ENCODE measurements at regions of chr10 and their contacts with region 1.

Region 1: DNA sequence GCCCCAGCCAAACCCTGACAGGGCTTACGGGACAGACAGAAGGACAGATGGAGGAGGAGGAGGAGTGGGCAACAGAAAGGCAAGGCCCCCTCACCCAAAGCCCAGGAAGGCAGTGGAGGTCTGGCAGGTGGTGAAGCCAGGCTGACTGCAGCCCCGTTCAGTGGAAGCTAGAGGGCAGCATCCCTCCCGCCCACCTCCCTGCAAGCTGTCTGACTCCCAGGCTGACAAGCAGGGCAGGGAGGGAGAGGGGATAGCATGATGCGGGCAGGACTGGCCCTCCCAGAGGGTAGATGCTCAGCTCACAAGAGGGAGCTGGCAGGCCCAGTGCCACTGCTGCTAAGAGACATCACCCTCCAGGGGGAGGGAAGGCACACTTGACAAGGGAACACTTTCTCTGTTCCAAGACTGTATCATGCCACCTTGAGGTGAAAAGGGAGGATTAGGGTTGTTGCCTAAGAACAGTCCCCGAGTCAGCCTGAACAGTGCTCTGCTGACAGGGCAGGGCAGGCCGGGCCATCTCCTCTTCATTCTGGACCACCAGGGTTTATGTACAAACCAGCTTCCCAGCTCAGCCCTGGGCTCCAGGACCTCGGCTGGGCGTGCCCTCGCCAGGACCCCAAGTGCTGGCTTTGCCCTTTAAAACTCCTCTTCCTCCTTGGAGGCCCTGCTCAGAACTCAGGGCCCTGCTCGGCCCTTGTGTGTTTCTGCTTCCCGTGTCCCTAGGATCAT is 61.8 kb downstream of the RASGEF1A start:
- DNase-seq: peak; percentile 79
- ATAC-seq: peak; percentile 73
- H3K4me3 Mint-ChIP-seq: no peak overlapping the region
- H3K27ac Mint-ChIP-seq: no peak overlapping the region
- H3K4me1 Mint-ChIP-seq: peaks cover 2% of the 10 kb centered on the region
- H3K27me3 Mint-ChIP-seq: no peaks in the 10 kb centered on the region
- CTCF ChIP-seq: peak; percentile 88

Region 2: DNA sequence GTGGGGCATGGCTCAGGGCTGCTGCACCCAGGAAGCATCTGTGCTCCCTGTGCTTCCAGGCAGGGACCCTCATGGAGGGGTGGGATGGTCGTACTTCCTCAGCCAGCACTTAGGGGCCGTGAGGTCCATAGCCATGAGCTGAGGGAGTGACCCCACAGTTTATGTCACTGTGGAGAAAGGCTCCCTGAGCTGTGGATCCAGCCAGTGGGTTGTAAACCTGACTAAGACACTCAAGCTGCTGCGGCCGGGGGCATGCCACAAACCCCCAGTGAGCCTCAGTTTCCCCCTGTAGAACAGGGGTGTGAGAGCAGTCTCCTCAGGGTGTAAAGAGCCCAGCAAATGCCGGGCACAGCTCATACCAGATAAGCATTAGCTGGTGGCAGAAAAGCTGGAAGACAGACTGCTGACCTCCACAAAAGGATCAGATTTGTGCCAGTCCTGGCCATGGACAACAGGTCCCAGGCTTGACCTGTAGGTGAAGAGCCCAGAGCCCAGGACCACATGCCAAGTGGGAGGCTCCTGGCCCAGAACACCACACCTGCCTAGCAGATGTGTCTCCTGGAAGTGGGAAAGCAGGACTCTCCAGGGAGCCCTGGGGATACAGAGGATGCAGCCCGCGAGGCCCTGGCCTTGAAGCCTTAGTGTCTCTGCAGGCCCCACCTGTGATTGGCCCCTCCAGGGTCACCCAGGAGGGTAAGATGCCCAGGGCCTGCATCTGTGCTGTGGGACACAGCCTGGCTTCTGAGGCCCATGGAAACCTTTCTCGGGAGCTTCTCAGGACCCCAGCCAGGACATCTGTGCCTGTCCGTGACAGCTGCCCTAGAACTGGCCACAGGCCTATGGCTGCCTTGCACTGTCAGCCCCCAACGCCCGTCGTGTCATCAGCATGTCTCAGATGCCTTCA is 206.4 kb before region 1 on chr10:
- CTCF ChIA-PET with region 1: no interaction called
- POLR2A ChIA-PET with region 1: no interaction called
- intact Hi-C with region 1: no loop called
- DNase-seq: no peak
- ATAC-seq: no peak
- H3K4me3 Mint-ChIP-seq: no peak overlapping the region
- H3K27ac Mint-ChIP-seq: no peak overlapping the region
- H3K4me1 Mint-ChIP-seq: no peaks in the 10 kb centered on the region
- H3K27me3 Mint-ChIP-seq: no peaks in the 10 kb centered on the region
- CTCF ChIP-seq: no peak

Region 3: DNA sequence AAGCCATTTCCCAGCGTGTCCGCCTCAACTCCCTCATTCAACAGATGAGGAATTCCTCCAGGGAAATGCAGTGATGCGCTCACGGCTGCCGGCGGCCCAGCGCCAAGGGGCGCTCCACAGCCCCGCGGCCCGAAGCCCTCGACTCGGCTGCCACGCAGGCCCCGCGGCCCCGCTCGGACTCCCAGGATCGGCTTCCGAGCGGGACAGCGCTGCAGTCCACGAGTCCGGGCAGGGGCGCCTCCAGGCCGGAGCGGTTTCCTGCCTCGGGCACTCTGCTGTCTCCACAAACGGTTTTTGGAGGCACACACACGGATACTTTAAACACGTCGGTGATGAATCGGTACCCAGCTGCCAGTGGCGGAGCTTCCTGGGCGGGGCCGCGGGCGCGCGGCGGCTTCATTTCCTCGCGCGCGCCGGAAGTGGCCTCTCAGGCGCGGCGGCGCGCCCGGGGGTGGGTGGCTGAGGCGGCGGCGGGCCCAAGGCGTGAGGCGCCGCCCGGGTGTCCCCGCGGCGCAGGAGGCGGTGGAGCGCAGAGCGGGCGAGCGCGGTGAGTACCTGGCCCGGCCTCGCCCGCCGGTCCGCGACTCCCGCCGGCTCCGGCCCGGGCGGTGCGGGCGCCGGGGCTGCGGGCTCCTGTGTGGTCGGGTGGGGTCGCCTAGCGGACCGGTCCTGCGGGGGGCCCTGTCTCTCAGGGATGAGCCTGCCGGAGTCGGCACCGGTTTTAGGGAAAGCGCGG is 66.9 kb before region 1 on chr10 and contains the start of gene CSGALNACT2:
- CTCF ChIA-PET with region 1: interaction called, 13 read pairs
- POLR2A ChIA-PET with region 1: interaction called, 3 read pairs
- intact Hi-C with region 1: loop called (anchors 5 kb)
- DNase-seq: peak; percentile 92
- ATAC-seq: peak; percentile 70
- H3K4me3 Mint-ChIP-seq: peak within 1 kb of the TSS; percentile 91
- H3K27ac Mint-ChIP-seq: peak within 1 kb of the TSS; percentile 97
- H3K4me1 Mint-ChIP-seq: peaks cover 41% of the 10 kb centered on the region
- H3K27me3 Mint-ChIP-seq: no peaks in the 10 kb centered on the region
- CTCF ChIP-seq: no peak
- total RNA-seq, gene CSGALNACT2: 15.3 to 15.5 TPM

Region 4: DNA sequence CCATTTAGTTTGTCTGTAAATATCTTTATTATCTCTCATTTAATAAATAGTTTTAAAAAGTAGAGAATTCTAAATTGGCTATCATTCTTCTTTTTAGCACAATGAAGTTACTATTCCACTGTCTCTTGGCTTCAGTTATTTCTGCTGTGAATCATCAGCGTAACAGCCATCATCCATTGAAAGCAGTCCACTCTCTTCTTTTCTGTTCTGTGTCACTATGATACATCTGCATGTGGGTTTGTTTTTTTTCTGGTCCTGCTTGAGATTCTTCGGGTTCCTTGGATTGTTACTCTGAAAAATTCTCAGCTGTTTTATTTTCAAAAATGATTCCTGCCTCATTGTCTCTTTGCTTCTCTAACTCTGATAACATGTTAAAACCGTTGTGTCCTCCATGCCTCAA is 14.3 kb before region 1 on chr10:
- CTCF ChIA-PET with region 1: interaction called, 42 read pairs
- POLR2A ChIA-PET with region 1: interaction called, 3 read pairs
- intact Hi-C with region 1: no loop called
- DNase-seq: no peak
- ATAC-seq: no peak
- H3K4me3 Mint-ChIP-seq: no peak overlapping the region
- H3K27ac Mint-ChIP-seq: no peak overlapping the region
- H3K4me1 Mint-ChIP-seq: no peaks in the 10 kb centered on the region
- H3K27me3 Mint-ChIP-seq: no peaks in the 10 kb centered on the region
- CTCF ChIP-seq: no peak

Region 5: DNA sequence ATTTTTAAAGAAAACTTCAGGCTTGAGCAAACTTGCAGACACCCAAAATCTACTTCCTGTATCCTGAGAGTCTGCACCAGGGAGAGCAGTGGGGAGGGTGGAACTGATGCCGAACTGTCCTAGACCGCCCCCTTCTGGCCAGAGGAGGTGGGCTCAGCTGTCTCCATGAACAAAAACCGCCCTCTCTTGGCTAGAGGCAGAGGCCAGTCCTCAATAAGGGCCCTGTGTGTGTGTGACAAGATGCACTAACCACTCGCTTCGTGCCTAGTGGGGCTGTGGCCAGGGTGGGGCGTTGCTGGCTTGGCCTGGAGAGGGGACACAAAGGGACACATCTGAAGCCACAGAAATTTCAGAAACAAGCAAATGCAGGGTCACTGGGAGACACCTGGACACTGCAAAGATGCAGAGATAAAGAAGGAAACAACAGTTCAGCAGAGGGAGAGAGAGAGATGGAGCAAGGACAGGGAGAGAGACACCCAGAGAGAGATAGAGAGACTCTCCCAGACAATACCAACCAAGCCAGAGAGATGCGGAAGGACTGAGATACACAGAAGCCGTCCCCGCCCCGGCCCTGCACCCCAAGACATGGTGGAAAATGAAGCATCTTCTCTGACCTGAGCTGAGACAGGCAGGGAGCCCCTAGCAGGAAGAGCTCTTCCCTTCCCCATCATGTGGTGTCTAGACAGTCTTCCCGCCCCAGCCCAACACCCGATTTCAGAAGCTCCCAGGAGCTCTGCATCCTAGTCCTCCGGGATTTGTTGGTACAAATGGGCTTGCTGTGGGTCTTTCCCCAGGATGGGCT is 143.6 kb after region 1 on chr10:
- CTCF ChIA-PET with region 1: interaction called, 13 read pairs
- POLR2A ChIA-PET with region 1: no interaction called
- intact Hi-C with region 1: no loop called
- DNase-seq: peak; percentile 92
- ATAC-seq: peak; percentile 100
- H3K4me3 Mint-ChIP-seq: no peak overlapping the region
- H3K27ac Mint-ChIP-seq: peak overlapping the region; percentile 12
- H3K4me1 Mint-ChIP-seq: peaks cover 8% of the 10 kb centered on the region
- H3K27me3 Mint-ChIP-seq: peaks cover 11% of the 10 kb centered on the region
- CTCF ChIP-seq: peak; percentile 95